Heart left ventricle (tissue), 16 donors: ENCODE measurements at regions of chr11 and their contacts with region 1.

Region 1: GRCh38 chr11:67391304-67392132 is at the start of gene RAD9A:
- DNase-seq: peak; percentile 96 to 99 (median 97)
- ATAC-seq: peak; percentile 65 to 89 (median 86)
- H3K4me3 ChIP-seq: peak within 1 kb of the TSS; percentile 51 to 93 (median 78)
- H3K27ac ChIP-seq: peak within 1 kb of the TSS; percentile 45 to 93 (median 81)
- H3K4me1 ChIP-seq: peaks cover 0 to 35% (median 16%) of the 10 kb centered on the region in 12 donors
- H3K27me3 ChIP-seq: no peaks in the 10 kb centered on the region
- CTCF ChIP-seq: no peak
- POLR2A ChIP-seq: peak in 1 of 2 donors; percentile 79
- total RNA-seq, gene RAD9A: 3.5 to 9.1 (median 5.8) TPM

Region 2: DNA sequence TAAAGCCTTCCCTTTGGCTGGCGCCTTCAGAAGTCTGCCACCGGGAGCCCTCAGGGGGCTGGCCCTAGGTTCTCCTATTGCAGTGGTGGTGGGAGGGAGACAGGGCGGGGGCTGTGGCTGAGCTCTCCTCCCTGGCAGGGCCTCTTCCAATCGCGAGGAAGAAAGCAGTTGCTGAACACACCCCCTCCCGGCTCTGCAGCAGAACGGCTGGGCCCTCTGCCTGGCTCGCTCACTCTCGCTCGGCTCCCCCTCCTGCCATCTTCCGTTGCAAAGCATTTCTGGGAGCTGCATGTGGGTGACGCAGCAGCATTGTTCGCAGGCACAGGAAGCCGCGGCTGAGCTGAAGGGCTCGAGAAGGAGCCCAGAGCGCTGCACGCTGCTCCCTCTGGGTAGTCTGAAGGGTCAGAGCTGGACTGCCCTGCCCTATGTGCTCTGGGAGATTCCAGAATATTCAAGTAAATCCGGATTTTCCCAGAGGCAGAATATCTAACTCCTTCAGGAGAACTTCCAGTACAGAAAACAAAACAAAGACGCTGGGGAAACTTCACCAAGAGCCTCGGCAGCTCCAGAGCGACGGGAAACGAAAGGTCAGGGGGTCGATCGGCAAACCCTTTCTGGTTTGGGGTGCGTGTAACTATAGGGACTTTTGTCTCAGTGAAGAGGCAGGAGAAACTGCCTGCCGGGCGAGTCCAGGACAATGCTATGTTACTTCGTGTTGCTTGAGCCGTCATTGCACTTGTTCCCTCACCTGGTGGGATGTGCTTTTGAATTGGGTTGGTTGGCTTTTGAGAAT is 151.5 kb before region 1 on chr11:
- intact Hi-C with region 1: no loop called
- DNase-seq: peak; percentile 96 to 99 (median 98)
- ATAC-seq: peak; percentile 97 to 99 (median 98)
- H3K4me3 ChIP-seq: peak overlapping the region; percentile 38 to 95 (median 70)
- H3K27ac ChIP-seq: peak overlapping the region; percentile 87 to 98 (median 92)
- H3K4me1 ChIP-seq: peaks cover 7 to 57% (median 46%) of the 10 kb centered on the region in 12 donors
- H3K27me3 ChIP-seq: no peaks in the 10 kb centered on the region
- CTCF ChIP-seq: peak in 5 of 12 donors; percentile 4 to 34 (median 22)
- POLR2A ChIP-seq: peak in 1 of 2 donors; percentile 96

Region 3: DNA sequence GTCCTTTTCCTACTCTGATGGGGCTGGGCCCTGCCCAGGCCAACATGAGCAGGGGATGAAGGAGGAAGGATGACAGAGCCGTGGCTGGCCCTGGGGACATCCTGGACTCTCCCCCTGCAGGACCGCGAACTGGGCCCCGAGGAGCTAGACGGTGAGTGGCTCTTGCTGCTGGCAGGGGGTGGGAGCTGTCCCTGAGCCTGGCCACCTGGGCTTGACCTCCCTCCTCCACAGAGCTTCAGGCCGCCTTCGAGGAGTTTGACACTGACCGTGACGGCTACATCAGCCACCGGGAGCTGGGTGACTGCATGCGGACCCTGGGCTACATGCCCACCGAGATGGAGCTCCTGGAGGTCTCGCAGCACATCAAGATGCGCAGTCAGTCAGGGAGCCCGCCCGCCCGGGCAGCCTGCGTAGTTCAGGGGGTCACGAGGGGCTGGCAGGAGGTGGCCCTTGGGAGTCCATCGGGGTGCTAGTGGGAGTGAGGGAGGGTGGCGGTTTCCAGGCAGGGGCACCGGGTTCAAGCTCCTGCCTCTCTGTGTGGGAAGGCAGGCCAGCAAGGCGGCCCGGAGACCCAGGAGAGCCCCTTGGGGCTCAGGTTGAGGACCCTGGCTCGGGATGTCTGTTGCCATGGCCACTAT is 64.7 kb after region 1 on chr11:
- intact Hi-C with region 1: no loop called
- DNase-seq: peak in 1 of 5 donors; percentile 22
- ATAC-seq: no peak
- H3K4me3 ChIP-seq: no peak overlapping the region
- H3K27ac ChIP-seq: no peak overlapping the region
- H3K4me1 ChIP-seq: peaks cover 0 to 14% (median 5%) of the 10 kb centered on the region in 12 donors
- H3K27me3 ChIP-seq: no peaks in the 10 kb centered on the region
- CTCF ChIP-seq: no peak
- POLR2A ChIP-seq: no peak

Region 4: DNA sequence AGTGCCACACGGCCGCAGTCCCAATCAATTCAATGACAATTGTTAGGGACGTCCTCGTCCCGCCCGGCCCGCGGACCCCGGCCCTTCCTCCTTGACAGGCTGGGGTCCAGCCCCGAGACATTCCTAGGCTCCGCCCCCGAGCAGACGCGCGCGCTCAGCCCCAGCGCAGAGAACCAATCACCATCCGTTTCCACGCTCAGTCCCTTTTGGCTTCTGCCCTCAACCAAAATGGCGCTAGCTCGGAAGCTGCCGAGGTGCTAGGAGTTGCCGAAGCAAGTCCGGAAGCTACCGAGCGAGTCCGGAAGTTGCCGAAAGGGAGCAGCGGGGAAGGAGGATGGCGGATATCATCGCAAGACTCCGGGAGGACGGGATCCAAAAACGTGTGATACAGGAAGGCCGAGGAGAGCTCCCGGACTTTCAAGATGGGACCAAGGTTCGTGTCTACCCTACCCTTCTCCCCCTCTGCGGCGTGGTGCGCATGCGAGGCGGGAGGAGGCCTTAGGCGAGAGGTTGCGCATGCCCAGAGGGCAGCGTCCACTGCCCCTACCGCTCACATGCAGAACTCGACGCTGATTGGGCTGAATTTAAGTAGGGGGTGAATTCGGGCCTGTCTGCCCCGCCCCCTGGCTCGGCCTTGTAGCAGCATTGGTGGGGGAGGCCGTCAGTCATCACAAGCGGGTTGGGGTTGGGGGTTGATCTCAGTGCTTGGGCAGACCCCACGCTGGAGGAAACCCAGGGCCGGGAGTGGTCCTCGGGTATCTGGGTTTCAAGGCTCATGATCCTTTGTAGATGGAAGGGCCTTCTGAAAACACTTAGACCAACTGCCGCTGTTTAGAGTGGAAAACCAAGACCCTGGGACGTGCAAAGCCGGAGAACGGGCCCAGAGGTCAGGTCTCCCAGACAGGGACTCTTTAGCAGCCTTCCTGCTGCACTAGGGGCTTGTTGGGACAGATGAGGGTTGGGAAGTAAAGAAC is 91.6 kb after region 1 on chr11 and contains the start of gene AIP:
- intact Hi-C with region 1: loop called in 1 of 10 experiments (anchors 5 kb)
- DNase-seq: peak; percentile 97 to 98 (median 98)
- ATAC-seq: peak; percentile 96 to 99 (median 99)
- H3K4me3 ChIP-seq: peak within 1 kb of the TSS; percentile 41 to 72 (median 60)
- H3K27ac ChIP-seq: peak within 1 kb of the TSS; percentile 21 to 91 (median 85)
- H3K4me1 ChIP-seq: peaks cover 5 to 44% (median 25%) of the 10 kb centered on the region in 12 donors
- H3K27me3 ChIP-seq: peaks cover 0 to 3% (median 0%) of the 10 kb centered on the region in 9 donors
- CTCF ChIP-seq: peak in 3 of 12 donors; percentile 11 to 37 (median 34)
- POLR2A ChIP-seq: peak in 1 of 2 donors; percentile 64
- total RNA-seq, gene AIP: 41.7 to 69.2 (median 53.0) TPM